PC-9 (cell line): ENCODE measurements at regions of chr3 and their contacts with region 1.

Region 1: DNA sequence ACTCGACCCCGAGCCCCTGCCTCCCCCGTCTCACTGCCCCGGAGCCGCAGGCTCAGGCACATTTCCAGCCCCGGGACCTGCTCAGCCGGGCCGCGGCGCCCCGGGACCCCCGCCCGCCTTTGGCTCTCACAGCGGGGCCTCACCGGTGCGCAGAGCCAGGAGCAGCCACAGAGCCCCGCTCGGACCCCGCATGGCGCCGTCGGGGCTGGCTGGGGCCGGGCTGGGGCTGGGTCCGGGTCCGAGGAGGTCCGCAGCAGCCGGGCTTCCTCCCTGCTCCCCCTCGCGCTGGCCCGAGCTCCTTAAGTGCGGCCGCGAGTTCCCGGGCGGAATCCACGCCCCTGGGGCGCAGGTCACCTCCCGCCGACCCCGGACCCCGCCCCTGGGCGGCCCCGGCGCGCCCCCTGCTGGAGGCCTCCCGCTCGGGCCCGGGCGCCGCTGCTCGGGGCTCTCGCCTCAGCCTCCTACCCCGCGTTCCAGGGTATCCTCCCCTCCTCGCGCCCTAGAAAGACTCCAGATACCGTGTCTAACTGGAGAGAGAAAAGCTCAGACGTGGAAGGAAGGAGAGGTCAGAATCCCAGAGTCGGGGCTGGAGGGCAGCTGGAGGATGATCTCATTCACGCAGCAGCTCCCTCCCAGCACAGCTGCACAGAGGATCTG is at the start of gene MELTF:
- DNase-seq: peak; percentile 46 to 90
- H3K4me3 ChIP-seq: peak within 1 kb of the TSS; percentile 82
- H3K27ac ChIP-seq: peak within 1 kb of the TSS; percentile 90
- H3K4me1 ChIP-seq: peaks cover 19% of the 10 kb centered on the region
- H3K27me3 ChIP-seq: no peaks in the 10 kb centered on the region
- CTCF ChIP-seq: peak; percentile 88
- total RNA-seq, gene MELTF: 154 and 202 TPM in 2 replicates

Region 2: GRCh38 chr3:196793235-196793641 is 236.4 kb before region 1 on chr3:
- CTCF ChIA-PET with region 1: no interaction called
- POLR2A ChIA-PET with region 1: interaction called, 5 read pairs
- intact Hi-C with region 1: loop called (anchors 1 kb)
- DNase-seq: peak; percentile 80 to 100
- H3K4me3 ChIP-seq: peak overlapping the region; percentile 37; the same call in 1 of the 2 replicates
- H3K27ac ChIP-seq: peak overlapping the region; percentile 92
- H3K4me1 ChIP-seq: peaks cover 81% of the 10 kb centered on the region
- H3K27me3 ChIP-seq: no peaks in the 10 kb centered on the region
- CTCF ChIP-seq: no peak

Region 3: DNA sequence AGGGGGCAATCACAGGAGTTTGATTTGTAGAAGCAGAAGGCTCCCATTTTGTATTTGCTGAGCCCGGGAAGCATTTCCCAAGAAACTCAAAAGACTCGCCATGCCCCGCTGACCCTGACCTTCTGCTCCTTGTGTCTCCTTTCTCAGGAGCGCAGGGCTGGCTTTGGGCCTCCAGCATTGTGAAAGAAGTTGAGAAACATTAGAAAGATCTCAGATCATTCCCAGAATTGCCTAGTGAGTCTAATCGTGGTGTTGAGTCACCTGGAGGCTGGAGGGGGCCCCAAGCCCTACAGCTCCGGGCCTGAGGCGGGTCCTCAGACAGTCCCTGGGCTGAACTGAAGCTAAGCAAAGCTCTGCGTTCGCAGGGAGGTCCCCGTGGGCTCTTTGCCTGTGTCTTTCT is 50.1 kb before region 1 on chr3:
- CTCF ChIA-PET with region 1: no interaction called
- POLR2A ChIA-PET with region 1: no interaction called
- intact Hi-C with region 1: loop called (anchors 2 kb)
- DNase-seq: no peak
- H3K4me3 ChIP-seq: no peak overlapping the region
- H3K27ac ChIP-seq: no peak overlapping the region
- H3K4me1 ChIP-seq: no peaks in the 10 kb centered on the region
- H3K27me3 ChIP-seq: no peaks in the 10 kb centered on the region
- CTCF ChIP-seq: no peak

Region 4: GRCh38 chr3:197482001-197482400 is 452.4 kb after region 1 on chr3:
- CTCF ChIA-PET with region 1: no interaction called
- POLR2A ChIA-PET with region 1: interaction called, 13 read pairs
- intact Hi-C with region 1: no loop called
- DNase-seq: no peak
- H3K4me3 ChIP-seq: no peak overlapping the region
- H3K27ac ChIP-seq: no peak overlapping the region
- H3K4me1 ChIP-seq: peaks cover 59% of the 10 kb centered on the region
- H3K27me3 ChIP-seq: no peaks in the 10 kb centered on the region
- CTCF ChIP-seq: no peak